Posterior vena cava (tissue), 2 donors: ENCODE measurements at regions of chr1 and their contacts with region 1.

Region 1: GRCh38 chr1:109312978-109313775 is 6.4 kb upstream of the MYBPHL start:
- DNase-seq: no peak

Region 2: DNA sequence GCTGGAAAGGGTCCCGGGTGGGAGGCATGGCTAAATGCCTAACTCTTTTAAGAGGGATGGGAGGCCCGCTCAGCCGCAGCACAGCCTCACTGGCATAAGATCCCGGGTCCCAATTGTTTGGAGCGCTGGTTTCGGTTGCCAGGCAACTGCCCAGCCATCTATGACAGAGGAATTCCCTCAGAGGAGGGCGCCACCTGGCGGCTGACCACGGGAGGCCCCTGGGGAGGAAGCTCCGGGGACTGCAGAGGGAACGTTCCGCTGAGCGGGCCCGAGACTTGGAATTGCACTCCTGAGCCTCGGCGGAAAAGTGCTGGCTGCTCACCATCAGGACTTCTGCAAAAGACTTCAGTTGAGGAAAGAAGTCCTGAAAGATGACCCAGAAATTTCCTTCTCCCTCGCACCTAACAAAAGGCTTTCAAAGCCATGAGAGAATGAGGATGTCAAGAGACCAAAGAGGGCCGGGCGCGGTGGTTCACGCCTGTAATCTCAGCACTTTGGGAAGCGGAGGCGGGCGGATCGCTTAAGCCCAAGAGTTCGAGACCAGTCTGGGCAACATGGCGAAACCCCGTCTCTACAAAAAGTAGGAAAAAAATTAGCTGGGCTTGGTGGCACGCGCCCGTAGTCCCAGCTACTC is 200.4 kb before region 1 on chr1:
- intact Hi-C with region 1: no loop called
- DNase-seq: peak; percentile 98

Region 3: DNA sequence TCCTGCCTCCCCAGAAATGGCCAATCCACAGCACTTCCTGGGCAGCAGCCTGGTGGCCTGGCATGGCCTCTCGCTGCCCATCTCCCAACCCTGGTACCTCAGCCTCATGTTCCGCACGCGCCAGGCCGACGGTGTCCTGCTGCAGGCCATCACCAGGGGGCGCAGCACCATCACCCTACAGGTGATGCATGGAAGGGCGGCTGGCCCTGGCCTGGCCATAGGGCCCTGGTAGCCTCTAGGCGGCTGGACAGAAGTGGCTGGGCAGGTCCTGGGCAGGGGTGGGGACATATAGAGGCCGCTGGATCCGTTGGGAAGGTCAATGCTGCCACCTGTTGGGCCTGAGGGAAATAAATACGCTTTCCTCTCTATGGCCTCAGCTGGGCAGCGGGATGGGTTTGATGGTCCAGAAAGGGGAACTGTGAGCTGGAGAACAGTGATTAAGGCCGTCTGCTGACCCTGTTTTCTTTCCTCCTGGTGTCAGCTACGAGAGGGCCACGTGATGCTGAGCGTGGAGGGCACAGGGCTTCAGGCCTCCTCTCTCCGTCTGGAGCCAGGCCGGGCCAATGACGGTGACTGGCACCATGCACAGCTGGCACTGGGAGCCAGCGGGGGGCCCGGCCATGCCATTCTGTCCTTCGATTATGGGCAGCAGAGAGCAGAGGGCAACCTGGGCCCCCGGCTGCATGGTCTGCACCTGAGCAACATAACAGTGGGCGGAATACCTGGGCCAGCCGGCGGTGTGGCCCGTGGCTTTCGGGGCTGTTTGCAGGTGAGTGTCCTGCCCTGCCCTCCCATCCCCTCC is 49.4 kb before region 1 on chr1:
- intact Hi-C with region 1: loop called in 1 of 2 experiments (anchors 1 kb)
- DNase-seq: peak; percentile 94